Calu3 (cell line): ENCODE measurements at regions of chr1 and their contacts with region 1.

Region 1: GRCh38 chr1:168439456-168440375 is 104.1 kb downstream of the XCL2 start:
- DNase-seq: peak; percentile 88
- H3K4me3 Mint-ChIP-seq: peak overlapping the region; percentile 55
- H3K27ac Mint-ChIP-seq: no peak overlapping the region
- H3K4me1 Mint-ChIP-seq: peaks cover 28% of the 10 kb centered on the region
- H3K27me3 Mint-ChIP-seq: peaks cover 9% of the 10 kb centered on the region
- CTCF ChIP-seq: peak; percentile 92

Region 2: GRCh38 chr1:168408536-168409242 is 31.0 kb before region 1 on chr1:
- CTCF ChIA-PET with region 1: no interaction called
- intact Hi-C with region 1: no loop called
- DNase-seq: peak; percentile 58
- H3K4me3 Mint-ChIP-seq: no peak overlapping the region
- H3K27ac Mint-ChIP-seq: peak overlapping the region; percentile 20
- H3K4me1 Mint-ChIP-seq: peaks cover 34% of the 10 kb centered on the region
- H3K27me3 Mint-ChIP-seq: no peaks in the 10 kb centered on the region
- CTCF ChIP-seq: no peak

Region 3: DNA sequence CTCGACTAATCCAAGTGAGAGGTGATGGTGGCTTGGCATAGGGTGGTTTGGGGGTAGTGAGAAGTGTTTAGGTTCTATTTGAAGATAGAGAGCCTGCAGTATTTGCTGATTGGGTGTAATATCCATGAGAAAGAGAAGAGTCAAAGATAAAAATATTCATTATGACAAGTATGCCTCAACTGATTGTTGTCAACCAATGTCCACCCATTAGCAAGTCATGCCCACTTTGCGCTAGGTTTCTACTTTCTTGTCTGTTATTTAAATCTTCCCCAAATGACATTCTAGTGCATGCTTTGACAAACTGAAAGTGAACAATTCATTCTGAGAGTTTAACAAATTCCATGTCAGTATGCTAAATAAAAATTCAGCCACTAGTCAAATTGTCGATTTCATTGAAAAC is 132.9 kb after region 1 on chr1:
- CTCF ChIA-PET with region 1: interaction called, 7 read pairs
- intact Hi-C with region 1: loop called (anchors 1 kb)
- DNase-seq: no peak
- H3K4me3 Mint-ChIP-seq: no peak overlapping the region
- H3K27ac Mint-ChIP-seq: no peak overlapping the region
- H3K4me1 Mint-ChIP-seq: peaks cover 8% of the 10 kb centered on the region
- H3K27me3 Mint-ChIP-seq: no peaks in the 10 kb centered on the region
- CTCF ChIP-seq: no peak